Transverse colon (tissue), 4 donors: ENCODE measurements at regions of chr12 and their contacts with region 1.

Region 1: GRCh38 chr12:109264095-109264942 is 44.8 kb downstream of the FOXN4 start:
- DNase-seq: peak; percentile 82
- H3K4me3 ChIP-seq: no peak overlapping the region
- H3K27ac ChIP-seq: peak overlapping the region in 2 of 4 donors; percentile 14 to 71
- H3K4me1 ChIP-seq: peaks cover 0 to 10% (median 3%) of the 10 kb centered on the region in 4 donors
- H3K27me3 ChIP-seq: no peaks in the 10 kb centered on the region
- CTCF ChIP-seq: peak; percentile 79 to 84 (median 82)
- EP300 ChIP-seq: no peak
- POLR2A ChIP-seq: no peak

Region 2: GRCh38 chr12:109165599-109165998 is 98.7 kb before region 1 on chr12:
- in situ Hi-C with region 1: no loop called
- intact Hi-C with region 1: no loop called
- DNase-seq: no peak
- H3K4me3 ChIP-seq: no peak overlapping the region
- H3K27ac ChIP-seq: peak overlapping the region in 2 of 4 donors; percentile 9 to 34
- H3K4me1 ChIP-seq: peaks cover 0 to 13% (median 3%) of the 10 kb centered on the region in 4 donors
- H3K27me3 ChIP-seq: no peaks in the 10 kb centered on the region
- CTCF ChIP-seq: no peak
- EP300 ChIP-seq: no peak
- POLR2A ChIP-seq: no peak

Region 3: DNA sequence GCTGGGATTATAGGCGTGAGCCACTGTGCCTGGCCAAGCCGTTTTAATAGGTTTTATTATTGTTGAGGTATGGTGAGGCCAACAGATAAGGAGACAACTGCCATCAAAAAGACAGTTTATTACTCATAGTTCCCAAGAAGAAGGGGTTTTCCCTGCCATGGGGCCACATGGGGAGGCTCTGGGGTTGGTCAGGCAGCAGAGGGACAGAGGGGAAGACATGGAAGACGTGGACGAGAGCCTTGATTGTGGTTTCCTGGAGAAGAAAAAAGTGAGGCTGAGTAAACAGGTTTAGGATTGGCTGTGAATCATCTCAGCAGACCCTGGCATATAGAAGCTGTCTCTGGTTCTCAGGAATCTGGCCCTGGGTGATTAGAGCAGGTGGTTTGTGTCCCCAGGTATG is 25.1 kb before region 1 on chr12:
- in situ Hi-C with region 1: no loop called
- intact Hi-C with region 1: no loop called
- DNase-seq: no peak
- H3K4me3 ChIP-seq: no peak overlapping the region
- H3K27ac ChIP-seq: no peak overlapping the region
- H3K4me1 ChIP-seq: no peaks in the 10 kb centered on the region
- H3K27me3 ChIP-seq: no peaks in the 10 kb centered on the region
- CTCF ChIP-seq: no peak
- EP300 ChIP-seq: no peak
- POLR2A ChIP-seq: no peak

Region 4: GRCh38 chr12:109385339-109386067 is 121.2 kb after region 1 on chr12:
- in situ Hi-C with region 1: loop called (anchors 5 to 10 kb)
- intact Hi-C with region 1: loop called (anchors 2 kb)
- DNase-seq: no peak
- H3K4me3 ChIP-seq: no peak overlapping the region
- H3K27ac ChIP-seq: peak overlapping the region in 3 of 4 donors; percentile 13 to 57 (median 20)
- H3K4me1 ChIP-seq: peaks cover 0 to 16% (median 4%) of the 10 kb centered on the region in 4 donors
- H3K27me3 ChIP-seq: peaks cover 3% of the 10 kb centered on the region
- CTCF ChIP-seq: peak; percentile 34 to 52 (median 49)
- EP300 ChIP-seq: no peak
- POLR2A ChIP-seq: no peak